H1 (cell line): ENCODE measurements at regions of chr4 and their contacts with region 1.

Region 1: DNA sequence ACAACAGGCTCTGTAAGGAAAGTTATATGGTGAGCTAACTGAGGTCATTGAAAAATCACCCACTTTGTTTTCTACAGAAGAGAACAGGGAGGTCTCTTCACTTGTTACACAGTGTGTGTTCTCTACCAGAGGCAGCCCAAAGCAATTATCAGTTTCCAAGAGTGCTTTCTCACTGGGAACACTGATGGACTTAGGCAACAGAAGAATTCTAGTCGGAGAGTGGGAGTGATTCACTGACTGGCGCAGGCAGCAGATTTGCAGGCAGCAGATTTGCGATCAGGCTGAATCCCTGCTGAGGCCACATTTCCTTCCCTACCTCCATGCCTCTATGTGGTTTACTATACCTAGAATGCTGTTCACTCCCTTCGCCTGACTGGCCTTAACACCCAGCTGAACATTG is 6.7 kb downstream of the OCIAD2 start:
- DNase-seq: no peak
- H3K4me3 ChIP-seq: no peak overlapping the region
- H3K27ac ChIP-seq: no peak overlapping the region
- H3K4me1 ChIP-seq: no peaks in the 10 kb centered on the region
- H3K27me3 ChIP-seq: no peaks in the 10 kb centered on the region
- CTCF ChIP-seq: no peak
- EP300 ChIP-seq: no peak
- POLR2A ChIP-seq: no peak
- RAD21 ChIP-seq: no peak

Region 2: DNA sequence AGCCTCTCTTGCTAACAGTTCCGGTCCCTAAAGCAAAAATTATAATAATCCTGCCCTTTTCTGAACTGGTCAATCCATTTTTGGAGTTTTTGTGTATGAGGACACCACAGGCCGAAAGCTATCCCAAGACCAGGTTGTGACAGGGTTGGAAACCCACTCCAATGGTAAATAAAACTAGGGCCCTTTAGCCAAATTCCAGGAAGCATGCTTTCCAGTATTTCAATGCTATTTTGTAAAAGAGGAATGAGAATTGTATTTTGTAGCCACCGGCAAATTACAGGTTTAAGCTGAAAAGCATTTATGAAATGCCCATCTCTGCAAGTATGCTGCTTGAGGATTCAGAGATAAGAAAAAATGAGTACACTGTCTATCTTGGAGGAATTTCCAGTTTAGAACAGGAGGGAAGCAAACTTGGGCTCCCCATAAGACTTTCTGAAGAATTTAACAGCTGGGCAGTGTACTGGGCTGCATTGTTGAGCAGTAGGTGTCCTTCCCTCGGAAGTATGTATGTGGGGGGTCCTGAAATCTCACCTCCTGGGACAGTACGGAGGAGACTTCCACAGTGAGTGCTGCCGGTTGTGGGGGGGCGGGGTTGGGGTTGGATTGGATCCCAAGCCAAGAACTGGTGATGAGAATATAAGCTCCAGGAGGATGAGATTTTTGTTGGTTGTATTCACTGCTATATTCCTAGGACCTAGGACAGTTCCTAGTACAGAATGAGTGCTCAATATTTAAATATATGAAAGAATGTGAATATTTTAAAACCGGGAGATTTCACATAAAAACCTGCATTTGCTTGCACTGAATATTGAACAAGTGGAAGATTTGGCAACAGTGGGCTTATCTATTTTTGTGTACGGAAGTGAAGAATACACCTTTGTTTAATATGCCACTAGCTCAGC is 20.1 kb before region 1 on chr4:
- CTCF ChIA-PET with region 1: no interaction called
- POLR2A ChIA-PET with region 1: interaction called, 10 read pairs
- DNase-seq: no peak
- H3K4me3 ChIP-seq: no peak overlapping the region
- H3K27ac ChIP-seq: no peak overlapping the region
- H3K4me1 ChIP-seq: no peaks in the 10 kb centered on the region; a peak in 1 of 7 replicates
- H3K27me3 ChIP-seq: no peaks in the 10 kb centered on the region
- CTCF ChIP-seq: no peak
- EP300 ChIP-seq: no peak
- POLR2A ChIP-seq: no peak
- RAD21 ChIP-seq: no peak

Region 3: DNA sequence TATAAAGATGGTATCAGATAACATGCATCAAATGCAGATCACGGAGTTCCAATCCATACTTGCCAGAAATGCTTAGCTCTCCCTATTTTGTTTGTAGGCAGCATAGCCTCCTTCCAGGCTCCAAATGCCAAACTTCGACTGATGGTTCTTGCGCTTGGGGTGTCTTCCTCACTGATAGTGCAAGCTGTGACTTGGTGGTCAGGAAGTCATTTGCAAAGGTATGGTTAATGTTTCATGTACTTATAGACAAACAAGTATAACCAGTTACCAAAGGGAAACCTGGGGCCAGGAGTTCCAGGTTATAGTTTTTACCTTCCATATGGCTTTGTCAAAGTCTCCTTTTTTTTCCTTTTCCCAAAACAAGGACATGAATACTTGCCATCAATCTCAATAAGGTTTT is 91.4 kb after region 1 on chr4:
- CTCF ChIA-PET with region 1: no interaction called
- POLR2A ChIA-PET with region 1: no interaction called
- DNase-seq: no peak
- H3K4me3 ChIP-seq: no peak overlapping the region
- H3K27ac ChIP-seq: no peak overlapping the region
- H3K4me1 ChIP-seq: no peaks in the 10 kb centered on the region
- H3K27me3 ChIP-seq: peaks cover 0 to 16% (median 7%) of the 10 kb centered on the region in 4 experiments; a peak in 6 of 7 replicates
- CTCF ChIP-seq: no peak
- EP300 ChIP-seq: no peak
- POLR2A ChIP-seq: no peak
- RAD21 ChIP-seq: no peak